ENCODE measurements at regions of chr6 and their contacts with region 1.

Region 1: GRCh38 chr6:73732845-73733675 is 37.1 kb downstream of the CD109 start:
- DNase-seq: peak; percentile 83
- H3K4me3 ChIP-seq: no peak overlapping the region
- H3K27ac ChIP-seq: no peak overlapping the region
- H3K4me1 ChIP-seq: no peaks in the 10 kb centered on the region
- H3K27me3 ChIP-seq: no peaks in the 10 kb centered on the region

Region 2: GRCh38 chr6:73680289-73680688 is 52.8 kb before region 1 on chr6:
- in situ Hi-C with region 1: loop called (anchors 5 kb)
- DNase-seq: no peak
- H3K4me3 ChIP-seq: no peak overlapping the region
- H3K27ac ChIP-seq: no peak overlapping the region
- H3K4me1 ChIP-seq: peaks cover 9% of the 10 kb centered on the region
- H3K27me3 ChIP-seq: no peaks in the 10 kb centered on the region

Region 3: DNA sequence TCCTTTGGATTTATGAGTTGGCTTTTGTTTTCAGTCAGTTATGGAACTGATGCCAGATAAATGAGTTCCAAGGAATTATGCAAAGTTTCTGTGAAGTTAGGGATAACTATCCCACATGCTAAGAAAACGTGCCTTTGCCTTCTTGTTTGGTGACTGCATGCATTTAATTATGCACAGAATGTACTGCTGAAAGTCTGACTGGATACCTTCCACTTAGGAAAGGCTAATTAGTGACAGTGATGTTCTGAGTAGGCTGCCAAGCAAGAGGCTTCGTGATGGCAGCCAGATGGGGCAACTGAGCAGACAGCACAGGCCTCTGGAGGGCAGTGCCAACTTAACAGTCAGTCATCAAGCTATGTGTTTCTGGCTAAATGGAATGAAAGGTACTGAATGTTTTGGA is 252.8 kb after region 1 on chr6:
- in situ Hi-C with region 1: no loop called
- DNase-seq: peak; percentile 84
- H3K4me3 ChIP-seq: no peak overlapping the region
- H3K27ac ChIP-seq: peak overlapping the region; percentile 53
- H3K4me1 ChIP-seq: peaks cover 42% of the 10 kb centered on the region
- H3K27me3 ChIP-seq: no peaks in the 10 kb centered on the region

Region 4: DNA sequence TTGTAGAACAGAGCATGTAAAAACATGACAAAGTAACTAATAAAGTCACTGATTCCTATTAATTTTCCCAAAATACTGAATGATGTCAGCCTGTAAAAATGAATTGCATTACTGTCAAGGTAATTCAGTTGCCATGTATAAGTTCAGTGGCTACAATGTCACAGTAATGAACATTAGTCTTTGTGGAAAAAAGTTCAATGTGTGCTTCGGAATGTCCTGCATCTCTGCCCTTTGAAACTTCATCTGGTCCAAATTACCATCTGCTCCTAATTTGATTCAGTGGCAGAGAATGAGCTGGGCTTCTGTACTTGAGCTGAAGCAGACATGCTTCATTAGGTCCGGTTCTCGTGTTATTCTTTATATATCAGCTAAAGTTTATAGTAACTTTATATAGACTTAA is 905.4 kb after region 1 on chr6:
- in situ Hi-C with region 1: no loop called
- DNase-seq: peak; percentile 58
- H3K4me3 ChIP-seq: no peak overlapping the region
- H3K27ac ChIP-seq: no peak overlapping the region
- H3K4me1 ChIP-seq: peaks cover 14% of the 10 kb centered on the region
- H3K27me3 ChIP-seq: no peaks in the 10 kb centered on the region